Thyroid gland (tissue), 4 donors: ENCODE measurements at regions of chr6 and their contacts with region 1.

Region 1: GRCh38 chr6:37169496-37170272 is at the start of gene PIM1:
- DNase-seq: peak; percentile 100
- H3K4me3 ChIP-seq: peak within 1 kb of the TSS; percentile 95 to 100 (median 96)
- H3K27ac ChIP-seq: peak within 1 kb of the TSS; percentile 87 to 95 (median 88)
- H3K4me1 ChIP-seq: peaks cover 13 to 37% of the 10 kb centered on the region in 2 donors
- H3K27me3 ChIP-seq: no peaks in the 10 kb centered on the region
- CTCF ChIP-seq: no peak
- POLR2A ChIP-seq: peak; percentile 95 to 98
- total RNA-seq, gene PIM1: 13.1 to 54.5 (median 22.2) TPM

Region 2: GRCh38 chr6:36885461-36886401 is 284.0 kb before region 1 on chr6 and contains the start of gene C6orf89:
- intact Hi-C with region 1: loop called (anchors 10 kb)
- DNase-seq: peak; percentile 98 to 99
- H3K4me3 ChIP-seq: peak within 1 kb of the TSS; percentile 47 to 68 (median 63)
- H3K27ac ChIP-seq: peak within 1 kb of the TSS; percentile 89 to 98 (median 93)
- H3K4me1 ChIP-seq: peaks cover 6 to 19% of the 10 kb centered on the region in 2 donors
- H3K27me3 ChIP-seq: no peaks in the 10 kb centered on the region
- CTCF ChIP-seq: peak in 4 of 6 experiments; percentile 87 to 98 (median 94)
- POLR2A ChIP-seq: peak in 1 of 2 donors; percentile 75
- total RNA-seq, gene C6orf89: 58.2 to 89.6 (median 68.9) TPM

Region 3: DNA sequence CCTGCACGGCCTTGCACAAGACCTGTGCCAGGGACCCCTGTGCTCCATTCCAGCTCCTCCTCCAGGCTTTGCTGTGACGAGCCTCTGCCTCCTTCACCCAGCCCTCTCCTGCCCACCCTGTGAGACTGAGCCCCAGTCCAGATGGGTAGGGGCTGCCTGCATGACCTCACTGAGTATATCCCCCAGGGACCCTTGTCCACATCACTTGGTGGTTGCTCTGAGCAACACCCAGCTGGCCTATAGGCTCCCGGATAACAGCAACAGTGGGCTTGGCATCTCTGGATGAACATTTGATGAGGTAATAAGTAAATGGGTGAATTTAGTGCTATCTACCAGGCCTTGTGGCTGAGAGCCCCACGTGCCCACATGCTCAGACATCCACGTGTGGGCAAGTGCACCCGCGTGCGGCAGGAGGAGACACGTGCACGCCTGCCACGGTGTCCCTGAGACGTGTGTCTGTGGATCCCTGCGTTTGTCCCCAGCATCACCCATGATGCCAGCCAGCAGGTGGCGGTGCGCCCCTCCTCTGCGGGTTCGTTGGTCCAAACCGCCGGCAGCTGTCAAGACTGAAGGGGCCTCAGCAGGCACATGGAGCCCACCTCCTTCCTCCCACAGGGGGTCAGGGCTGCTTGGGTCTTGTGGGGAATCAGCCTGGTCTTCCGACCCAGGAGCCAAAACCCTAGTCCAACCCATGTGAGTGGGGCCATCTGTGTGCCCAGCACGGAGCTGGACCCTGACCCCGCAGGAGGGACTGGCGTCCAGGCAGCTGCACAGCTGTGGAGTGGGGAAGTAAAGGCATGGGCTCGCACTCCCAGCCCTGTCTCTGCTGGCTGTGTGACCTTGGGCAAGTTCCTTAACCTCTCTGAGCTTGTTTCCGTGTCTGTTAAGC is 118.3 kb before region 1 on chr6:
- intact Hi-C with region 1: loop called (anchors 2 kb)
- DNase-seq: peak; percentile 92 to 94
- H3K4me3 ChIP-seq: no peak overlapping the region
- H3K27ac ChIP-seq: no peak overlapping the region
- H3K4me1 ChIP-seq: peaks cover 0 to 21% of the 10 kb centered on the region in 2 donors
- H3K27me3 ChIP-seq: no peaks in the 10 kb centered on the region
- CTCF ChIP-seq: peak; percentile 74 to 96 (median 93)
- POLR2A ChIP-seq: no peak

Region 4: GRCh38 chr6:37102279-37103168 is 67.2 kb before region 1 on chr6:
- intact Hi-C with region 1: loop called (anchors 10 kb)
- DNase-seq: peak; percentile 94 to 95
- H3K4me3 ChIP-seq: peak overlapping the region in 1 of 3 donors; percentile 18
- H3K27ac ChIP-seq: peak overlapping the region; percentile 77 to 93 (median 83)
- H3K4me1 ChIP-seq: peaks cover 22 to 23% of the 10 kb centered on the region in 2 donors
- H3K27me3 ChIP-seq: no peaks in the 10 kb centered on the region
- CTCF ChIP-seq: no peak
- POLR2A ChIP-seq: peak in 1 of 2 donors; percentile 77

Region 5: GRCh38 chr6:37576336-37576813 is 406.7 kb after region 1 on chr6:
- intact Hi-C with region 1: no loop called
- DNase-seq: no peak
- H3K4me3 ChIP-seq: no peak overlapping the region
- H3K27ac ChIP-seq: no peak overlapping the region
- H3K4me1 ChIP-seq: no peaks in the 10 kb centered on the region
- H3K27me3 ChIP-seq: no peaks in the 10 kb centered on the region
- CTCF ChIP-seq: no peak
- POLR2A ChIP-seq: no peak